AG04450 (cell line): ENCODE measurements at regions of chrX and their contacts with region 1.

Region 1: DNA sequence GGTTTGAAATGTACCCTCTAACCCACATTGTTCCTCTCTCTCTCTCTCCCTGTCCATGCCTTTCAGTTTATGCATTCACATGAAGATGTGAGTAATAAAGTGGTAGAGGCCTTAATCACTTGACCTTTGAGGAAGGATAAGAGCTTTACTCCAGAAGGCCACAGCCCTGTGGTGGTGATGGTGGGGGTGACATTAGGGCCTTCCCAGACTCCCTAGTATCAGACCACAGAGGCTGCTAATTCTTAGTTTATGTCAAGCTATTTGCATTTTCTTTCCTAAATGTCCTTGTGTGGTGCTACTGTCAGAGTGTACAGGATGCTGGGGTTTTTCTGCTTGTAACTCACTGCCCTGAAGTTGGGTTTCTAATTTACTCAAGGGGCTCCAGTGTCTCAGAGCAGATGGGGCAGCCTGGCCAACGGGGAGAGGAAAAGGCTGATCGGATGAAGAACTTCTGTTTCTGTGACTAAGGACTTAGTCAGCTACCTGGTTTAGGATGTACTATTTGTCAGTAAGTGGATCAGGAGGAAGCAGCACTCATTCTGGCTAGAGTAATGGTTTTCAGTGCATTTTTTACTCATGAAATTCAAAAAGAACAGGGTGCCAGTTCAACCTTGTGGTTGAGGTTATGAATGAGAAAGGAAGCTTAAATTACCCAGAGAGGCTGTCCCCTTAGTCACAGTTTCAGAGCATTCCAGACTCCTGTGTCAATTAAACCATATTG is 509.6 kb upstream of the DIPK2B start:
- DNase-seq: peak; percentile 76
- H3K4me3 ChIP-seq: no peak overlapping the region
- H3K27ac ChIP-seq: peak overlapping the region; percentile 78
- H3K27me3 ChIP-seq: no peaks in the 10 kb centered on the region
- CTCF ChIP-seq: no peak

Region 2: GRCh38 chrX:45621376-45622041 is 88.7 kb before region 1 on chrX:
- CTCF ChIA-PET with region 1: no interaction called
- POLR2A ChIA-PET with region 1: interaction called, 18 read pairs
- DNase-seq: no peak
- H3K4me3 ChIP-seq: no peak overlapping the region
- H3K27ac ChIP-seq: peak overlapping the region; percentile 85
- H3K27me3 ChIP-seq: no peaks in the 10 kb centered on the region
- CTCF ChIP-seq: no peak

Region 3: GRCh38 chrX:45668686-45669443 is 41.4 kb before region 1 on chrX:
- CTCF ChIA-PET with region 1: no interaction called
- POLR2A ChIA-PET with region 1: interaction called, 21 read pairs
- DNase-seq: peak; percentile 55
- H3K4me3 ChIP-seq: no peak overlapping the region
- H3K27ac ChIP-seq: peak overlapping the region; percentile 73
- H3K27me3 ChIP-seq: no peaks in the 10 kb centered on the region
- CTCF ChIP-seq: no peak

Region 4: DNA sequence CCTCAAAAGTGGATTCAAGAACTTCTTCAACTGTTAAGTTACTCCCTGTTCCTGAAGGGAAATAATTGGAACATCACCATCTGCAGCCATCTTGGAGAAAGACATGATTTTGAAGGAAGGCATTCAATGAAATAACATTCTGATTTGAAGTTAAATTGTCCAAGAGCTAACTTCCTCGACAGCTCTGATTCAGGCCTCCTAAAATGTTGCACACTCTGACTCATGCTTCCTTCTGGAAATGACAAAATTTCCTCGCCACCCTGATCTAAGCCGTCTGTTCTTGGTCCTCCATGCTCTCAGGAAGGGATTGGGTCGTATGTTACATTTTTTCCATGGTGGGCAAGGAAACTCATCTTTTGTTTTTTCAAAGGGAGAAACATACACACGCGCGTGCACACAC is 12.7 kb before region 1 on chrX:
- CTCF ChIA-PET with region 1: no interaction called
- POLR2A ChIA-PET with region 1: interaction called, 17 read pairs
- DNase-seq: peak; percentile 45
- H3K4me3 ChIP-seq: no peak overlapping the region
- H3K27ac ChIP-seq: peak overlapping the region; percentile 61
- H3K27me3 ChIP-seq: no peaks in the 10 kb centered on the region
- CTCF ChIP-seq: no peak

Region 5: GRCh38 chrX:45766981-45767501 is 56.8 kb after region 1 on chrX:
- CTCF ChIA-PET with region 1: no interaction called
- POLR2A ChIA-PET with region 1: no interaction called
- DNase-seq: no peak
- H3K4me3 ChIP-seq: peak overlapping the region; percentile 62
- H3K27ac ChIP-seq: peak overlapping the region; percentile 11
- H3K27me3 ChIP-seq: no peaks in the 10 kb centered on the region
- CTCF ChIP-seq: no peak